ENCODE measurements at regions of chr2 and their contacts with region 1.

Region 1: DNA sequence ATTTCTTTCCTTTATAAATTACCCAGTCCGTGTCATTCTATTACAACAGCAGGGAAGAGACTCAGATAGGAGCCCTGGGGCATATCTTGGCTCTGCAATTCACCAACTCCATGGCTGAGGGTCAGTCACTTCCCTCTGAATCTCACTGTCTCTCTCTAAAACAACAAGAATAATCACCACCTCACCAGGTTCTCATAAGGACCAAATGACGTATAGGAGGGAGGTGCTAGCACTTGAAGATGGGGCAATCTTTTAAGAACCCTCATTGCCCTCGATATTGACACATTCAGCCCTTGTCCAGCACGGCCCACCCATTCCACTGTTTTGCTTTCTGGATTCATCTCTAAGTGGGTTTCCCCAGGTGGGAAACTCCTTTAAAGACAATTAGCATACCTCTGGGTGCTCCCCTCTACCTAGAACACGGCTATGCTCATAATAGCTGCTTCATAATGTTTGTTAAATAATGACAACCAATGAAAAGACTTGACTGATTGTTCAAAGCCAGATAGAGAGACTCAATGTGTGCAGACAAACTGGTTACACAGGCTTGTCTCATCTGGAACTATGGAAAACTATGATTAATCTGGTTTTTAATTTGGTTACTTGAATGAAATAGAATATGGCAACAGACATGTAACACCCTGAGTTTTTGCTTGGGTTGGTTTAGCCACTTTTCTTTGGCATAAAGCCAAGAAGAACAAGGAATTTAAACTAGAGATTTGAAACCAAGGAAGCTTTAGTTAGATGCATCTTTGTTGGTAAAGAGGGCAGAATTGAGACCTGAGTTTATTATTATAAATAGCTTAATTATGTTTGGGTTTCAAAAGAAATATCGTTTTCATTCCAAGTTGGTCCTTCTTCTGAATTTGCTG is 15.2 kb downstream of the MYCN start:
- DNase-seq: no peak
- H3K4me3 ChIP-seq: no peak overlapping the region
- H3K27ac ChIP-seq: no peak overlapping the region
- H3K4me1 ChIP-seq: no peaks in the 10 kb centered on the region
- H3K27me3 ChIP-seq: no peaks in the 10 kb centered on the region
- CTCF ChIP-seq: no peak
- POLR2A ChIP-seq: no peak

Region 2: GRCh38 chr2:15895615-15896469 is 59.7 kb before region 1 on chr2:
- intact Hi-C with region 1: loop called (anchors 2 kb)
- DNase-seq: no peak
- H3K4me3 ChIP-seq: no peak overlapping the region
- H3K27ac ChIP-seq: no peak overlapping the region
- H3K4me1 ChIP-seq: no peaks in the 10 kb centered on the region
- H3K27me3 ChIP-seq: no peaks in the 10 kb centered on the region
- CTCF ChIP-seq: no peak
- POLR2A ChIP-seq: no peak

Measured in breast epithelium (tissue), 4 donors.